ENCODE measurements at regions of chr20 and their contacts with region 1.

Region 1: GRCh38 chr20:45095753-45096371 is 5.1 kb downstream of the KCNS1 start:
- DNase-seq: peak; percentile 84 to 87
- H3K4me3 ChIP-seq: no peak overlapping the region
- H3K4me3 Mint-ChIP-seq: no peak overlapping the region
- H3K27ac Mint-ChIP-seq: no peak overlapping the region
- H3K4me1 ChIP-seq: no peaks in the 10 kb centered on the region
- H3K4me1 Mint-ChIP-seq: no peaks in the 10 kb centered on the region
- H3K27me3 ChIP-seq: no peaks in the 10 kb centered on the region
- H3K27me3 Mint-ChIP-seq: no peaks in the 10 kb centered on the region
- CTCF ChIP-seq: peak; percentile 95 to 99

Region 2: GRCh38 chr20:45011108-45011526 is 84.7 kb before region 1 on chr20:
- CTCF ChIA-PET with region 1: interaction called, 50 read pairs
- POLR2A ChIA-PET with region 1: no interaction called
- intact Hi-C with region 1: loop called (anchors 1 kb)
- DNase-seq: peak; percentile 70 to 80
- H3K4me3 ChIP-seq: no peak overlapping the region
- H3K4me3 Mint-ChIP-seq: no peak overlapping the region
- H3K27ac Mint-ChIP-seq: peak overlapping the region; percentile 1
- H3K4me1 ChIP-seq: peaks cover 44% of the 10 kb centered on the region
- H3K4me1 Mint-ChIP-seq: peaks cover 40% of the 10 kb centered on the region
- H3K27me3 ChIP-seq: no peaks in the 10 kb centered on the region
- H3K27me3 Mint-ChIP-seq: no peaks in the 10 kb centered on the region
- CTCF ChIP-seq: peak; percentile 89 to 96

Region 3: GRCh38 chr20:45080867-45081624 is 14.8 kb before region 1 on chr20:
- CTCF ChIA-PET with region 1: interaction called, 12 read pairs
- POLR2A ChIA-PET with region 1: no interaction called
- intact Hi-C with region 1: no loop called
- DNase-seq: peak in 1 of 2 experiments; percentile 67
- H3K4me3 ChIP-seq: no peak overlapping the region
- H3K4me3 Mint-ChIP-seq: no peak overlapping the region
- H3K27ac Mint-ChIP-seq: no peak overlapping the region
- H3K4me1 ChIP-seq: peaks cover 12% of the 10 kb centered on the region
- H3K4me1 Mint-ChIP-seq: peaks cover 6% of the 10 kb centered on the region
- H3K27me3 ChIP-seq: no peaks in the 10 kb centered on the region
- H3K27me3 Mint-ChIP-seq: no peaks in the 10 kb centered on the region
- CTCF ChIP-seq: peak; percentile 67 to 75

Region 4: GRCh38 chr20:45157962-45158361 is 62.1 kb after region 1 on chr20:
- CTCF ChIA-PET with region 1: no interaction called
- POLR2A ChIA-PET with region 1: no interaction called
- intact Hi-C with region 1: no loop called
- DNase-seq: no peak
- H3K4me3 ChIP-seq: no peak overlapping the region
- H3K4me3 Mint-ChIP-seq: no peak overlapping the region
- H3K27ac Mint-ChIP-seq: no peak overlapping the region
- H3K4me1 ChIP-seq: no peaks in the 10 kb centered on the region
- H3K4me1 Mint-ChIP-seq: no peaks in the 10 kb centered on the region
- H3K27me3 ChIP-seq: no peaks in the 10 kb centered on the region
- H3K27me3 Mint-ChIP-seq: peaks cover 22% of the 10 kb centered on the region
- CTCF ChIP-seq: no peak